ENCODE measurements at regions of chr1 and their contacts with region 1.

Region 1: DNA sequence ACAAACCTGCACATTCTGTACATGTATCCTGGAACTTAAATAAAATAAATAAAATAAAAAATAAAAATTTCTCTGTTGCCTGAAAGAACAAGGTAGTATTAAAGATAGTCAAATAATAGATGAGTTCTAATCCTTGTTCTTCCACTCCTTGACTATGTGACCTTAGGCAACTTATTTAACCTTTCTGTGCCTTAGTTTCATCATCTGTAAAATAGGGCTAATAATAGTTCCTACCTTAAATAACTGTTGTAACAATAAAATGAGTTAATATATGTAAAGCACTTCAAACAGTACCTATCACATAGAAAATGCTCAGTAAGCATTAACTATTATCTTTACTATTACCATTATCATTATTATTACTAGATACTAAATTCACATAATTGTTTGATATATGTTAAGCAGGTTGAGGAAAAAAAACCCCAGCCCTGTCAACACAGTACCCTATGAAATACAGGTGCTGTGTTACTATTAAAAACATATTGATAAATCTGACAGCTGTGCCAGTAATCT is 23.1 kb downstream of the SASS6 start:
- DNase-seq: no peak
- ATAC-seq: no peak
- H3K4me3 ChIP-seq: no peak overlapping the region
- H3K27ac ChIP-seq: no peak overlapping the region
- H3K4me1 ChIP-seq: no peaks in the 10 kb centered on the region
- H3K27me3 ChIP-seq: no peaks in the 10 kb centered on the region
- CTCF ChIP-seq: no peak

Region 2: GRCh38 chr1:99548943-99549605 is 560.5 kb before region 1 on chr1:
- CTCF ChIA-PET with region 1: no interaction called
- POLR2A ChIA-PET with region 1: no interaction called
- intact Hi-C with region 1: loop called (anchors 5 kb)
- DNase-seq: no peak
- ATAC-seq: no peak
- H3K4me3 ChIP-seq: no peak overlapping the region
- H3K27ac ChIP-seq: no peak overlapping the region
- H3K4me1 ChIP-seq: peaks cover 19% of the 10 kb centered on the region
- H3K27me3 ChIP-seq: no peaks in the 10 kb centered on the region
- CTCF ChIP-seq: no peak

Region 3: DNA sequence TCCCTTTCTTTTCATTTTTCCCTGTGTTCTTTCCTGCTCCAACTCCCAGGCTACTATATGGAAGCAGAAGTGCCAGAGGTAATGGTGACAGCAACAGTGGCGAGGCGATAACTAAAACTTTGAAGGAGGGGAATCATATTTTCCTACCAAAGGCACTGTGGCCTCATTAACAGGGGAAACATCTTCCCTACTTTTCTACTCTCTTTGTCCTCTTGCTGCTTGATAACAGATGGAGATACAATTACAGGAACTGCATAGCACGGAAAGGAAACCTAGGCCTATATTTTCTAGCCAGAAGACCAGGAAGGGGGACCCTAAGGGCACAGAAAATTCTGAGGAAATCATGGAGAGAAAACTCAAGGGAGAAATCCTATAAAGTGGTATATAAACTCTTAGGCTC is 19.1 kb before region 1 on chr1:
- CTCF ChIA-PET with region 1: no interaction called
- POLR2A ChIA-PET with region 1: no interaction called
- intact Hi-C with region 1: no loop called
- DNase-seq: no peak
- ATAC-seq: no peak
- H3K4me3 ChIP-seq: no peak overlapping the region
- H3K27ac ChIP-seq: no peak overlapping the region
- H3K4me1 ChIP-seq: no peaks in the 10 kb centered on the region
- H3K27me3 ChIP-seq: no peaks in the 10 kb centered on the region
- CTCF ChIP-seq: no peak

Region 4: DNA sequence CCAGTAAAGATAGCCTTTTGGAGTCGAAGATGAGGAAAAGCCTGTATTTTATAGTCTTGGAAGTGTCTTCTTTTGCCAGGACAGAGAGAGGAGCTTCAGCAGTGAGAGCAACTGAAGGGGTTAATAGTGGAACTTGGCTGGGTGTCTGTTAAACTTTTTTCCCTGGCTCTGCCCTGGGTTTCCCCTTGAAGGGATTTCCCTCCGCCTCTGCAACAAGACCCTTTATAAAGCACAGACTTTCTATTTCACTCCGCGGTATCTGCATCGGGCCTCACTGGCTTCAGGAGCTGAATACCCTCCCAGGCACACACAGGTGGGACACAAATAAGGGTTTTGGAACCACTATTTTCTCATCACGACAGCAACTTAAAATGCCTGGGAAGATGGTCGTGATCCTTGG is 609.9 kb after region 1 on chr1 and contains the start of gene VCAM1:
- CTCF ChIA-PET with region 1: no interaction called
- POLR2A ChIA-PET with region 1: no interaction called
- intact Hi-C with region 1: no loop called
- DNase-seq: no peak
- ATAC-seq: no peak
- H3K4me3 ChIP-seq: no peak within 1 kb of the TSS
- H3K27ac ChIP-seq: no peak within 1 kb of the TSS
- H3K4me1 ChIP-seq: peaks cover under 1% of the 10 kb centered on the region; the same call in 1 of the 2 replicates
- H3K27me3 ChIP-seq: no peaks in the 10 kb centered on the region
- CTCF ChIP-seq: no peak
- total RNA-seq, gene VCAM1: not detected in 2 replicates